Breast epithelium (tissue), 4 donors: ENCODE measurements at regions of chr3 and their contacts with region 1.

Region 1: GRCh38 chr3:189276481-189277219 is 104.9 kb downstream of the TPRG1 start:
- DNase-seq: peak in 1 of 2 donors; percentile 57
- H3K4me3 ChIP-seq: no peak overlapping the region
- H3K27ac ChIP-seq: peak overlapping the region; percentile 32 to 48
- H3K4me1 ChIP-seq: no peaks in the 10 kb centered on the region
- H3K27me3 ChIP-seq: no peaks in the 10 kb centered on the region
- CTCF ChIP-seq: no peak
- POLR2A ChIP-seq: no peak

Region 2: GRCh38 chr3:189041482-189042090 is 235.1 kb before region 1 on chr3:
- intact Hi-C with region 1: no loop called
- DNase-seq: no peak
- H3K4me3 ChIP-seq: no peak overlapping the region
- H3K27ac ChIP-seq: peak overlapping the region in 1 of 2 donors; percentile 20
- H3K4me1 ChIP-seq: no peaks in the 10 kb centered on the region
- H3K27me3 ChIP-seq: no peaks in the 10 kb centered on the region
- CTCF ChIP-seq: peak in 2 of 3 donors; percentile 36 to 53
- POLR2A ChIP-seq: no peak

Region 3: DNA sequence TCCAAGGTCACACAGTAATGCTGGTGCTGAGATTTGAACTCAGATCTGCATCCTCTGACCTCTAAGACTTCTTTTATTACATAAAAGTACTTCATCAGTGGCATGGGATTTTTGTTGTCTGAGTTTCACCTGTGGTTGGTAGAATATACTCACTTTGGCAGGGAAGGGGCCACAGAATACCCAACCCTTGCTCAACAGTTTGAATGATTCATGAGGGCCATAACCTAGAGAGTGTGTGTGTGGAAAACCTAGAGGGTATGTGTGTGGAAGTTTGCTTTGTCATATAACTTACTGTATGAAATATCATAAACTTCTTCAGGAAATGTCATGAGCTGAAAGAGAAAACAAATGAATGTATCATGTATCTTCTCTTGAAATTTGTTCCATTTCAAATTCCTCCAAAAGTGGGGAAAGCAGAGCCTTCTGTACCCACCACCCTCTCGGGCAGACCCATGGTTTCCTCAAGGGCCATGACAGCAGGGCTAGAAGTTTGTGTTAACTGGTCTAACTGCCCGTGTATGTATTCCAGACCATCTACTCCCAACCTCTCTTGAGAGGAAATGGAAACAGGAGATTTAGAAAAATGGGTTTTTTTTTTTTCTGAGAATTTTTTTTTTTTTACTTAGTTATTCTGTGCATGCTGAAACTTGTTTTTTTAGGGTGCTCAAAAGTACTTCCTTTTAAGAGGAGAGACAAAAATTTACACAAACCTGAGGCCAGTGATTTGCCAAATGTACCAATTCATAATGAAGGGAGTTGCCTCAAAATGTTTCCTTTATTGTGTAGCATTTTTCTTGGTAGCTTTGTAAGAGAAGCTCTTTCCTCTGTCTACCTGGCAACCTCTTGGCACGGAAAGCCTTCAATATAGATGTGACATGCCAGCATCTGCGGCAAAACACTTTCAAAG is 22.1 kb after region 1 on chr3:
- intact Hi-C with region 1: loop called (anchors 1 kb)
- DNase-seq: no peak
- H3K4me3 ChIP-seq: no peak overlapping the region
- H3K27ac ChIP-seq: peak overlapping the region in 1 of 2 donors; percentile 20
- H3K4me1 ChIP-seq: no peaks in the 10 kb centered on the region
- H3K27me3 ChIP-seq: no peaks in the 10 kb centered on the region
- CTCF ChIP-seq: no peak
- POLR2A ChIP-seq: no peak

Region 4: GRCh38 chr3:189309400-189309975 is 32.8 kb after region 1 on chr3:
- intact Hi-C with region 1: no loop called
- DNase-seq: peak in 1 of 2 donors; percentile 49
- H3K4me3 ChIP-seq: no peak overlapping the region
- H3K27ac ChIP-seq: peak overlapping the region; percentile 32 to 76
- H3K4me1 ChIP-seq: no peaks in the 10 kb centered on the region
- H3K27me3 ChIP-seq: no peaks in the 10 kb centered on the region
- CTCF ChIP-seq: no peak
- POLR2A ChIP-seq: no peak

Region 5: DNA sequence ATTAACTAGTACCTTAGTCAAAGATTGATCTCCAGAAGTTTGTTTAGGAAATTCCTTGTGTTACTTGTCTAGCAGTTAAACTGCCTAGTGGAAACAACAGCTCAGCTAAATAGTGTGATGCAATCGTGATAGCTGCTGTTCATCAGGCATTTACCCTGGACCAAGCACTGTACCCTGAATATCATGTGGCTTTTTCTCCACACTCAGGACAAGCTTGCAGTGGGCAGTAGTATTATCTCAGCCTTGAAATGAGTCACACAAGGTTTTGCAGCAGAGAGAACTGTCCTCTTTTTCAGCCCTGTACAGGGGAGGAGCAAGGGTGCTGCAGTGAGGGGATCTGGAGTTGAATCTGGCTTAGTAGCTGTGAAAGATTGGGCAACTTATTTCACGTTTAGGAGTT is 562.9 kb after region 1 on chr3:
- intact Hi-C with region 1: loop called (anchors 5 kb)
- DNase-seq: no peak
- H3K4me3 ChIP-seq: no peak overlapping the region
- H3K27ac ChIP-seq: peak overlapping the region in 1 of 2 donors; percentile 16
- H3K4me1 ChIP-seq: no peaks in the 10 kb centered on the region
- H3K27me3 ChIP-seq: no peaks in the 10 kb centered on the region
- CTCF ChIP-seq: no peak
- POLR2A ChIP-seq: no peak

Region 6: DNA sequence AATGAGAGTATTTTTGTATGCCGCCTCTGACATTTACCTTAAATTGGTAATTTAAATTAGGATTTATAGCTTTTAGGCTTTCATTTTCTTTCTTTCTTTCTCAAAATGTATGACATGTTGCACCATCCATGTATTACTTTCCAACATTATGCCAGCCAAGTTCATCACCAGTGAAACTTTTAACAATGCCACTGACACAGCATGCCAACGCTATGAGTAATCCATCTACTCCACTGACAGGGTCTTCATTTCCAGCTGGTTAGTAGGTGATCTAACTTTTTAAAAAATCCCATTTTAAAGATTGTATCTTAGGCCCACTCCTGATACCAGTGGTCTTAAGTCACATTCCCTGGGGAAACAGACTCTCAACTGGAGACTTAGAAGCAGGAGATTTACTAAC is 1089.5 kb after region 1 on chr3:
- intact Hi-C with region 1: no loop called
- DNase-seq: no peak
- H3K4me3 ChIP-seq: no peak overlapping the region
- H3K27ac ChIP-seq: no peak overlapping the region
- H3K4me1 ChIP-seq: no peaks in the 10 kb centered on the region
- H3K27me3 ChIP-seq: no peaks in the 10 kb centered on the region
- CTCF ChIP-seq: no peak
- POLR2A ChIP-seq: no peak